Upper lobe of right lung (tissue), 1 donor: ENCODE measurements at regions of chr12 and their contacts with region 1.

Region 1: GRCh38 chr12:52715416-52715815 is 12.1 kb upstream of the KRT77 start:
- DNase-seq: peak; percentile 70
- ATAC-seq: peak; percentile 69
- H3K4me3 ChIP-seq: no peak overlapping the region
- H3K27ac ChIP-seq: no peak overlapping the region
- H3K4me1 ChIP-seq: peaks cover 6% of the 10 kb centered on the region
- H3K27me3 ChIP-seq: peaks cover 48% of the 10 kb centered on the region
- CTCF ChIP-seq: peak; percentile 16

Region 2: DNA sequence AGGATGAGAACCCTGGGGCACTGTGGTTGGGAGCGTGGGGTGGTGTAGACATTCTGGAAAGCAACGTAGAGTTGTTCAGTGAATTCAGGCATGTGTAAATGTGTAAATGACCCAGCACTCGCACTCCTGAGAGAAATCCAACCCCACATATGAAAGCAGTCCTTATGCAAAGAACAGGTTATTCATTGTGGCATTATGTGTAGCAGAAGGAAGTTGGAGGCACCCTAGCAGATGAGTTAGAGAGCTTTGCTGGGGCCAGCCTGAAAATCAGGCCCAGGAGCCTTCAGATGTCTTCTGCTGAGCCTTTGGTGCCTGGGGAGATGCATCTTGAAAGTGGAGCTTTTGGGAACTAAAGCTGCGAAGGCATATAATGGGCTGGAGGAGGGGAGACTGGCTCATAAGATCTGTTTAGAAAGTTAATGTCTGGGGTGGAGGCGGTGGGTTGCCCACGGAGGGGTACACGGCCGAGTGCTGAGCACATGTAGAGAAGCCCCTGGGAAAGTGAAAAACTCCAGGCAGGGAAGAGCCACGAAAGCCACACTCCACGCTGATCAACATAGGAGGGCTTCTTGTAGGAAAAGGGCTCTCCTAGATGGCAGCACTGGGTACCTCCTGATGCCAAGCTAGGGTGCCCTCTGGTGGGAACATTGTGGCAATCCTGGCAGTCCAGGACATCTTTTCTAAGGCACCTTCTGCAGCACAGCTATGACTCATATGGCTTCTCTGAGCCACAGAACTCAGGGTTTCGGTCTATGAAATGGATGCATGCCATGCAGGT is 388.2 kb before region 1 on chr12:
- intact Hi-C with region 1: no loop called
- DNase-seq: peak; percentile 82
- ATAC-seq: peak; percentile 96
- H3K4me3 ChIP-seq: no peak overlapping the region
- H3K27ac ChIP-seq: no peak overlapping the region
- H3K4me1 ChIP-seq: no peaks in the 10 kb centered on the region
- H3K27me3 ChIP-seq: no peaks in the 10 kb centered on the region
- CTCF ChIP-seq: peak; percentile 87

Region 3: GRCh38 chr12:52850681-52851080 is 135.3 kb after region 1 on chr12:
- intact Hi-C with region 1: loop called (anchors 10 kb)
- DNase-seq: no peak
- ATAC-seq: no peak
- H3K4me3 ChIP-seq: no peak overlapping the region
- H3K27ac ChIP-seq: no peak overlapping the region
- H3K4me1 ChIP-seq: no peaks in the 10 kb centered on the region
- H3K27me3 ChIP-seq: peaks cover 16% of the 10 kb centered on the region
- CTCF ChIP-seq: no peak